ENCODE measurements at regions of chr1 and their contacts with region 1.

Region 1: GRCh38 chr1:44354840-44355581 is at the start of gene ERI3:
- DNase-seq: peak; percentile 99
- ATAC-seq: peak; percentile 99
- H3K4me3 ChIP-seq: peak within 1 kb of the TSS; percentile 75 to 88
- H3K27ac ChIP-seq: peak within 1 kb of the TSS in 1 of 2 donors; percentile 41
- H3K4me1 ChIP-seq: peaks cover 0 to 3% of the 10 kb centered on the region in 2 donors
- H3K27me3 ChIP-seq: no peaks in the 10 kb centered on the region
- total RNA-seq, gene ERI3: 44.2 to 45.5 TPM

Region 2: GRCh38 chr1:44318097-44319088 is 36.6 kb before region 1 on chr1:
- intact Hi-C with region 1: loop called in 1 of 2 experiments (anchors 5 kb)
- DNase-seq: no peak
- ATAC-seq: no peak
- H3K4me3 ChIP-seq: no peak overlapping the region
- H3K27ac ChIP-seq: no peak overlapping the region
- H3K4me1 ChIP-seq: no peaks in the 10 kb centered on the region
- H3K27me3 ChIP-seq: no peaks in the 10 kb centered on the region

Measured in aorta (tissue), 5 donors.